ENCODE measurements at regions of chr3 and their contacts with region 1.

Region 1: DNA sequence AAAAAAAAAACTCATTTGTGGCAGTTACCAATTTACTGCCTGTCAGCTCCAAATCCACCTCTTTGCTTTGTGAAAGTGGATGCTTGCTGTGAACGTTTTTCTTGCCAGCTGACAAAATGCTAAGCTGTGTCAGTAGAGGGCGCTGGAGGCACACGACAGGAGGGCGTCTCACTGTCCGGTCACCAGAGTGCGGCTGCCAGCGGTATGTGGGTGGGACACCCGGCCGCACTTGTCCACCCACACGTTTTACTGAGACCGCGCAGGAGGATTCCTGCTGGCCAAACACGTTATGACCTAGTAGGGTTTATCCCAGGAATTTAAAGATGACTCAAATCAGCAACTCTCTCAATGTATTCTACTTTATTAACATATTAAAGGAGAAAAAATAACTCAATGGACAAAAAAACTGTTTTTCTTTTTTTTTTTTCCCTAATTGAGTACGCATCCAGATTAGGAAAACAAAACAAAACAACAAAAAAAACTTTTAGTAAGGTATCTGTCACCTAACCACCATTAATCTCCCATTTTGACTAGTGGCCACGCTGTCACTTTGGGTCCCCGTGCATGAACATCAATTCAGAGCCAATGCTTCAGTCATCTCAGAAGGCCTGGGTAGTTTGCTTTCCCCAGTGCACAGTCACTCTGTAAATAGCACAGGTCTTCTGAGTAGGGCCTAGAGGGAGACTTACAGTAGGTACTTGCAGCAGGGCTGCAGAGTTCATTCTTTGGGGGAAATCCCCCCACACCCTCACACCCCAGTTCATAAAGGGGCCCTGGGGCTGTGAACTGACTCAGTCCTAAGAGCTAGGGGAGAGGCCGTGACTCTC is 43.8 kb upstream of the RPL35A start:
- DNase-seq: peak; percentile 89
- H3K4me3 ChIP-seq: no peak overlapping the region
- H3K27ac ChIP-seq: no peak overlapping the region
- H3K4me1 ChIP-seq: no peaks in the 10 kb centered on the region
- H3K27me3 ChIP-seq: no peaks in the 10 kb centered on the region
- CTCF ChIP-seq: peak; percentile 94

Region 2: DNA sequence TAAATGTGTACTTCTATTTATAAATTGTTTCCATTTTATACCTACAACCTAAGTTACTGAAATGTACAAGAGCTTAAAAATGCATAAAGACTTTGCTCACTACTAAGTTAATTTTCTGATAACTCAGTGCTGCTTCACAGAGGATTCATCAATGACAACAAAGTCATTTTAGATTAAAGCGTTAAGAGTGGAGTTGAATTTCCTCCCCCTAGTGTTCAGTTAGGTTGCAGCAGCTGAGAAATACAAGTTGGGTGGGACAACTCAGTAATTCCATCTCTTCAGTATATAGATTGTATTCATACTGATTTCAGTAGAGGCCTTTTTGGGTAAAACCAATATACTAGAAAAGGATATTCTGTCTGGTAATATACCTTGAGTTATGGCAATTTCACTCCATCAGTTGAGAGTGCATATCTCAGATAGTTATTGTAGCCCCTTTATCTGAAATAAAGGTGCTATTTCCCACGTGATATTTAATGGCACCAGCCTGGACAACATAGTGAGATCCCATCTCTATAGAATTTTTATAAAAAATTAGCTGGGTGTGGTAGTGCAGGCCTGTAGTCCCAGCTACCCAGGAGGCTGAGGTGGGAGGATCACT is 36.8 kb after region 1 on chr3:
- CTCF ChIA-PET with region 1: interaction called, 4 read pairs
- POLR2A ChIA-PET with region 1: no interaction called
- intact Hi-C with region 1: loop called (anchors 5 kb)
- DNase-seq: peak; percentile 73
- H3K4me3 ChIP-seq: no peak overlapping the region
- H3K27ac ChIP-seq: no peak overlapping the region
- H3K4me1 ChIP-seq: no peaks in the 10 kb centered on the region
- H3K27me3 ChIP-seq: no peaks in the 10 kb centered on the region
- CTCF ChIP-seq: peak; percentile 83

Region 3: GRCh38 chr3:198088421-198088955 is 182.3 kb after region 1 on chr3:
- CTCF ChIA-PET with region 1: no interaction called
- POLR2A ChIA-PET with region 1: no interaction called
- intact Hi-C with region 1: loop called (anchors 5 kb)
- DNase-seq: no peak
- H3K4me3 ChIP-seq: no peak overlapping the region
- H3K27ac ChIP-seq: no peak overlapping the region
- H3K4me1 ChIP-seq: peaks cover 3% of the 10 kb centered on the region
- H3K27me3 ChIP-seq: no peaks in the 10 kb centered on the region
- CTCF ChIP-seq: no peak

Measured in A673 (cell line).